ENCODE measurements at regions of chr10 and their contacts with region 1.

Region 1: DNA sequence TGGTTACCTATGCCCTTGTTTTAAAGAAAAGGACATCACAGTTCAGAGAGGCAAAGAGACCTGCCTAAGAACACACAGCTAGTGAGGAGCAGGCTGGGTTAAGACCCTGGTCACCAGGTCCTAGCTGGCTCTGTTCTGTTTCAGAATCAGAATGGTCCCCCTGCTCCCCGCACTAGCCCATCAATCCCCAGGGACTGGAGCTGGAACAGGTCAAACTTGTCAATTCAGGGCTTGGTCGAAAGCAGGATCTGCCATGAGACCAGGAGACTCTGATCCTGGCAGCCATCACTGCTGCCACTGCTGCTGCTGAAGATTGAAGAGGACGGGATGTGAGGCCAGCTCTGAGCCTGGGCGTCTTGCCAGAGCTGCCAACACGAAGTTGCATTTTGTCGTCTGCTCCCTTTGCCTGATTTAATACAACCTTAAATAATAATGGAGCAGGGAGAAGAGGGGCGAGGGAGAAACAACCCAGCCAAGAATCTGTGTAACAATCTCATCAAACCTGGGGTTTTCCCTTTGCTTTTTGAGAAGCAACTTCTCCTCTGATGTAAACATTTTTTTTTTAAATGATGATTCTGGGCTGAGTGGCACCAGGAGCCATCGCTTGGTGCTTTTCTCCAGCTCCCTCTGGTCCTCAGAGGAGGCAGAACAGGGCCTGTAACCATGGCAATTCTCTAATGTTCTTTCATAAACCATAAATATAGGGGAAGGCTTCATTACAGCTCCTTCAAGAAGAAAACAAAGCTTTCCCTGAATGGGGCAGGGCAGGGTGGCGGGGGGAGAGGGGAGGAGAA is 119.0 kb upstream of the SORCS3 start:
- DNase-seq: peak; percentile 71
- ATAC-seq: peak; percentile 79

Region 2: DNA sequence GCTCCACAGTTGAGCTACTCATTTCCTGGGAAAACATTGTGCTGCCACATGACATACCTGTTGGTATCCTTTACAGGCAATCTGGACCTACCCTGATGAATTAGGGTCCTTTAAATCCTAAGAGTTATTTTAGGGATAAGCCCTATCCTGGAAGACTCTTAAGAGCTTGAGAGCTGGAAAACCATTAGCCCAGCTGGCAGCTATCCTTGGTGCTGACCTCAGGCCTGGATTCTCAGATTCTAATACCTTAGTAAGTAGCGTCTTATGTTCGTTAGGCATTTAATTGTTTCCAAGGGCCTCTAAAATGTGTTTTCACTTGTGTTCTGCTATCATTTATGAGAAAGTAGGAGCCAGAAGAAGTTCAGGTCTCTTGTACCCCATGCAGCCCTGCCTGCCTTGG is 26.0 kb after region 1 on chr10:
- intact Hi-C with region 1: no loop called
- DNase-seq: no peak
- ATAC-seq: no peak

Region 3: GRCh38 chr10:104690959-104691358 is 168.9 kb after region 1 on chr10:
- intact Hi-C with region 1: loop called (anchors 2 kb)
- DNase-seq: no peak
- ATAC-seq: no peak

Measured in Right ventricle myocardium inferior (tissue), 1 donor.